ENCODE measurements at regions of chr3 and their contacts with region 1.

Region 1: GRCh38 chr3:136752422-136753325 is 496 bp upstream of the STAG1 start:
- DNase-seq: peak; percentile 97 to 99
- H3K4me3 ChIP-seq: peak overlapping the region; percentile 77
- H3K4me3 Mint-ChIP-seq: peak overlapping the region; percentile 76
- H3K27ac Mint-ChIP-seq: peak overlapping the region; percentile 92
- H3K4me1 ChIP-seq: peaks cover 17% of the 10 kb centered on the region
- H3K4me1 Mint-ChIP-seq: peaks cover 18% of the 10 kb centered on the region
- H3K27me3 ChIP-seq: no peaks in the 10 kb centered on the region
- H3K27me3 Mint-ChIP-seq: no peaks in the 10 kb centered on the region
- CTCF ChIP-seq: peak in 1 of 2 experiments; percentile 26

Region 2: GRCh38 chr3:136075218-136075808 is 677.4 kb before region 1 on chr3:
- CTCF ChIA-PET with region 1: interaction called, 7 read pairs
- POLR2A ChIA-PET with region 1: no interaction called
- intact Hi-C with region 1: loop called (anchors 1 kb)
- DNase-seq: peak; percentile 61 to 69
- H3K4me3 ChIP-seq: no peak overlapping the region
- H3K4me3 Mint-ChIP-seq: no peak overlapping the region
- H3K27ac Mint-ChIP-seq: peak overlapping the region; percentile 15
- H3K4me1 ChIP-seq: peaks cover 13% of the 10 kb centered on the region
- H3K4me1 Mint-ChIP-seq: peaks cover 9% of the 10 kb centered on the region
- H3K27me3 ChIP-seq: no peaks in the 10 kb centered on the region
- H3K27me3 Mint-ChIP-seq: no peaks in the 10 kb centered on the region
- CTCF ChIP-seq: peak; percentile 78 to 86

Region 3: GRCh38 chr3:136390574-136390973 is 362.1 kb before region 1 on chr3:
- CTCF ChIA-PET with region 1: interaction called, 29 read pairs
- POLR2A ChIA-PET with region 1: interaction called, 5 read pairs
- intact Hi-C with region 1: loop called (anchors 1 kb)
- DNase-seq: no peak
- H3K4me3 ChIP-seq: no peak overlapping the region
- H3K4me3 Mint-ChIP-seq: no peak overlapping the region
- H3K27ac Mint-ChIP-seq: no peak overlapping the region
- H3K4me1 ChIP-seq: no peaks in the 10 kb centered on the region
- H3K4me1 Mint-ChIP-seq: no peaks in the 10 kb centered on the region
- H3K27me3 ChIP-seq: no peaks in the 10 kb centered on the region
- H3K27me3 Mint-ChIP-seq: no peaks in the 10 kb centered on the region
- CTCF ChIP-seq: no peak

Region 4: DNA sequence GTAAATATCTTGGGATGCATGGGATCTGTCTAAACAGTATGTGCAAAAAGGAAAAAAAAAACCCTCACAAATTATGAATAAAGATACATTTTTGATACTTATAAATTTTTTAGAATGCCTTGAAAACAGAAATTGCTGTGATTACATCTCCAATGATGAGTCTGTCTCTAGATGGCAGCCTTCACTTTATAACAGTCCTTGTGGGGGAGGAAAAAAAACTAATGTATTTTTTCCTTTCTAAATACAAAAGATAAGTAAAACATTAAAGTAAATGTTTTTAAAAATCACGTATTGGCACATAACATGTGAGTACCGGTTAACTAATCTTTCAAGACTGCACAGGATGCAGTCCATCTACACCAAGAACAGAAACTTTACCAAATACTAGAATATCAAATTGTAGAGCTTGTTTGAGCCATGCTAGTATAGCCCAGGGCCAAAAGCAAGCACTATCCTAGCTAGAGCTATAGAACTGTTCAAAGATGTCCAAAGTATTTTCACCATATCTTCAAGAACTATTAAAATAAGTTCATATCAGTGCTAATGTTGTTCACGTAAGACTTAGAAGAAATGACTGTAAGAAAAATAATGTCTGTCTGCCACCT is 206.9 kb before region 1 on chr3:
- CTCF ChIA-PET with region 1: interaction called, 55 read pairs
- POLR2A ChIA-PET with region 1: interaction called, 10 read pairs
- intact Hi-C with region 1: loop called (anchors 1 kb)
- DNase-seq: no peak
- H3K4me3 ChIP-seq: no peak overlapping the region
- H3K4me3 Mint-ChIP-seq: no peak overlapping the region
- H3K27ac Mint-ChIP-seq: no peak overlapping the region
- H3K4me1 ChIP-seq: 0 out of 2 replicates have a peak, but pooled peaks cover 8% of the 10 kb centered on the region
- H3K4me1 Mint-ChIP-seq: peaks cover 10% of the 10 kb centered on the region
- H3K27me3 ChIP-seq: no peaks in the 10 kb centered on the region
- H3K27me3 Mint-ChIP-seq: no peaks in the 10 kb centered on the region
- CTCF ChIP-seq: peak; percentile 10 to 30

Region 5: DNA sequence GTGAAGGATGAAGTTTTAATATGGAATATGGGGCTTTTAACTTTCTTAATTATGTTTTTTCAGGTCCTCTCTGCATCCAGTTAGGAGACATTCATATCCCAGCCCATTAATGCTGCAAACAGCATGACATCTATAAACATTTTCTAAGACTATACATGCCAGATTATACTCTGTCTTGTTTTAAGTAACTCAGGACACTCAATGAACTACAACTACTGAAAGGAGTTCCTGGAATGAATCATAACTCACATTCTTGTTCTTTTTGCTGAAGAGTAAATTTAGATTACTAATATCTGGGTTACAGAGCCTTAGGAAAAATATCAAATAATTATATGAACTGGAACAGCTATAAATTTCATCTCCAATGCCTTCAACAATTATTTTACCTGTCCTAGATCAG is 167.9 kb before region 1 on chr3:
- CTCF ChIA-PET with region 1: interaction called, 20 read pairs
- POLR2A ChIA-PET with region 1: interaction called, 8 read pairs
- intact Hi-C with region 1: loop called (anchors 5 kb)
- DNase-seq: no peak
- H3K4me3 ChIP-seq: no peak overlapping the region
- H3K4me3 Mint-ChIP-seq: peak overlapping the region; percentile 37
- H3K27ac Mint-ChIP-seq: peak overlapping the region; percentile 43
- H3K4me1 ChIP-seq: peaks cover 44% of the 10 kb centered on the region
- H3K4me1 Mint-ChIP-seq: peaks cover 29% of the 10 kb centered on the region
- H3K27me3 ChIP-seq: no peaks in the 10 kb centered on the region
- H3K27me3 Mint-ChIP-seq: no peaks in the 10 kb centered on the region
- CTCF ChIP-seq: no peak

Region 6: GRCh38 chr3:136624894-136625815 is 127.5 kb before region 1 on chr3:
- CTCF ChIA-PET with region 1: interaction called, 19 read pairs
- POLR2A ChIA-PET with region 1: interaction called, 9 read pairs
- intact Hi-C with region 1: loop called (anchors 2 kb)
- DNase-seq: peak; percentile 73 to 80
- H3K4me3 ChIP-seq: no peak overlapping the region
- H3K4me3 Mint-ChIP-seq: peak overlapping the region; percentile 73
- H3K27ac Mint-ChIP-seq: peak overlapping the region; percentile 87
- H3K4me1 ChIP-seq: peaks cover 40% of the 10 kb centered on the region
- H3K4me1 Mint-ChIP-seq: peaks cover 36% of the 10 kb centered on the region
- H3K27me3 ChIP-seq: no peaks in the 10 kb centered on the region
- H3K27me3 Mint-ChIP-seq: no peaks in the 10 kb centered on the region
- CTCF ChIP-seq: no peak

Region 7: DNA sequence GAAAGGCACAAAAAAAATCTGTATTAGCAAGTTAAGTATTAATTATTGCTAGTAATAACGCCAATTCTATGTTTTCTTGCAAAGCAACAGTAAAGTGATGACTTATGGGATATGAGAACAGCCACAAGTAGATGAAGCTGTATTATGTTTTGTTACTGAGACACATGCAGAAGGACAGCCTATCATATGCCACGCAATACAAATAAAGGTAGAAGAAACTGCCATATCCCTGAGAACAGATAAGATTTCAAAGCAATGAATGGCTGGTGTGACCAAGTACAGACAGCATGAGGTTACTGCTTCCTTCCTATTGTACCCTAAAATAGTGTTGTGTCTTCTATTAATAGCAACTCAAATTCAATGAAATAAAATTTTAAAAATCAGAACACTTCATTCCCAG is 27.2 kb before region 1 on chr3:
- CTCF ChIA-PET with region 1: no interaction called
- POLR2A ChIA-PET with region 1: no interaction called
- intact Hi-C with region 1: no loop called
- DNase-seq: no peak
- H3K4me3 ChIP-seq: no peak overlapping the region
- H3K4me3 Mint-ChIP-seq: no peak overlapping the region
- H3K27ac Mint-ChIP-seq: peak overlapping the region; percentile 4
- H3K4me1 ChIP-seq: peaks cover 13% of the 10 kb centered on the region
- H3K4me1 Mint-ChIP-seq: peaks cover 5% of the 10 kb centered on the region
- H3K27me3 ChIP-seq: no peaks in the 10 kb centered on the region
- H3K27me3 Mint-ChIP-seq: no peaks in the 10 kb centered on the region
- CTCF ChIP-seq: no peak

Region 8: DNA sequence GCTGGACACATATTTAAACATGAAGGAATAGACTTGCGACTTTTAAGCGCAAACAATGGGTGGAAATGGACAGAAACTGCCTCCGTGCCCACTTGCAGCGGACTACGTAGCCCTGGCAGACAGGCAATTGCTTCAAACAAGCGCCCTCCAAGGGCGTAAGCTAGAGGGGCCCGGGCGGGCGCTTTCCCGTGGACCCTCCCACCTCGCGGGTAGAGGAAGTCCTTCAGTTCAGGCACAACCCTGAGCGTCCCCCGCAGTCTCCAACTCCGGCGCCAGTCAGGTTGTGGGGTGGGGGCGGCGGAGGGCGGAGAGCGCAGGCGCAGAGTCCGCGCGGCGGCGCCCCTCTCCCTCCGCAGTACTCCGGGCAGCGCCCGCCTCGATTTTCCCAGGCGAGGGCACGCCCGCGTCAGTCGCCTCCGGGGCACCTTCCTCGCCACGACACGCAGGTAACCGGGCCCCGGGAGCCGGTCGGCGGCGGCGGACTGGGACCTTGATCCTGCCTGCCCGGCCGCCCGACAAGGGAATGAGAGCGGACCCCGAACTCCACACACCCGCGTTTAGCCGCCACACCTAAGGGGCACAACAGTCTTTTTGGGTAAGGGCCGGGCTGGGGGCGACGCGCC is 66.2 kb after region 1 on chr3 and contains the start of gene SLC35G2:
- CTCF ChIA-PET with region 1: no interaction called
- POLR2A ChIA-PET with region 1: no interaction called
- intact Hi-C with region 1: no loop called
- DNase-seq: peak in 1 of 2 experiments; percentile 51
- H3K4me3 ChIP-seq: peak within 1 kb of the TSS; percentile 59
- H3K4me3 Mint-ChIP-seq: peak within 1 kb of the TSS; percentile 93
- H3K27ac Mint-ChIP-seq: peak within 1 kb of the TSS; percentile 70
- H3K4me1 ChIP-seq: 0 out of 2 replicates have a peak, but pooled peaks cover 4% of the 10 kb centered on the region
- H3K4me1 Mint-ChIP-seq: no peaks in the 10 kb centered on the region
- H3K27me3 ChIP-seq: no peaks in the 10 kb centered on the region
- H3K27me3 Mint-ChIP-seq: no peaks in the 10 kb centered on the region
- CTCF ChIP-seq: no peak
- total RNA-seq, gene SLC35G2: 3.8 and 4.2 TPM in 2 replicates

Region 9: GRCh38 chr3:136955813-136956212 is 203.1 kb after region 1 on chr3:
- CTCF ChIA-PET with region 1: no interaction called
- POLR2A ChIA-PET with region 1: interaction called, 6 read pairs
- intact Hi-C with region 1: loop called (anchors 10 kb)
- DNase-seq: peak; percentile 62 to 76
- H3K4me3 ChIP-seq: no peak overlapping the region
- H3K4me3 Mint-ChIP-seq: peak overlapping the region; percentile 27
- H3K27ac Mint-ChIP-seq: peak overlapping the region; percentile 78
- H3K4me1 ChIP-seq: peaks cover 40% of the 10 kb centered on the region
- H3K4me1 Mint-ChIP-seq: peaks cover 41% of the 10 kb centered on the region
- H3K27me3 ChIP-seq: no peaks in the 10 kb centered on the region
- H3K27me3 Mint-ChIP-seq: no peaks in the 10 kb centered on the region
- CTCF ChIP-seq: no peak